SK-N-SH (cell line): ENCODE measurements at regions of chr11 and their contacts with region 1.

Region 1: DNA sequence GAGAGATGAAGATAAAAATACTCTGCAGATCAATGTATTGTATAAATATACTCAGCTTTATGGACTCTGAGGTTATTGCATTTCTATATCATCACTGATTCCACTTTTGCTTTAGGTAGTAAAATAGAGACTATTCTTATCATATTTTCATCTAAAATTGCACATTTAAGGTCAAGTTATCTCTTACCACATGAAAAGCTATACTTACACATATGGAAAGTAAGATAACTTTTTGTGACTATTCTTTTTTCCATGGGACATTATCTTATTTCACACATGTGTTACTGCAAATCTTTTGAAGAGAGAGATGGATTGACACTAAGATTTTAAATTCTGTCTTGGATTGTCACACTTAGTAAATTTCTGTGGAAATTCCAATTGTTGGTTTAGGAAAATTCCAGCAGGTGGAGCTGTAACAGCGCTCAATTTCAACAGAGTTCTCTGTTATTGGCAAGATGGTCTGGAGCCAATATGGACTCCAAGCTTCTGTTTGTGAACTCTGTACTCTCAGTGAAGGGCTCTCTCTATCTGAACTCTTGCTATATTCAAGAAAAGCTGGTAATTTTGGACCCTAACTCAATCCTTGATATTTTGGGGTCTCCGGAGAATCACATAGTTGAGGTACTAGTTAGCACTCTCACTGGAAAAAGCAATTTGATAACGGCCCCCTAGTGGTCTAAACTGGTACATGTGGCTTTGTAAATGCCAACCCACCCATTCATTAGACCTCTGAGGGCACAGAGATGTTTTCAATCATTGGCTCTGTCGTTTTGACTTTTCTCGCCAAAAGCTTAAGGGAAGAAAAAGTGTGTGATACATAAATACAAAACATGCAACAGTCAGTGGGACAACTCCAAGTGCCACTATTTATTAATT is 429.7 kb downstream of the ETS1 start:
- DNase-seq: peak; percentile 56
- H3K4me3 ChIP-seq: peak overlapping the region; percentile 28 to 46; a peak in 3 of 4 replicates
- H3K27ac ChIP-seq: peak overlapping the region in 1 of 2 experiments; percentile 55; a peak in 1 of 4 replicates
- H3K4me1 ChIP-seq: no peaks in the 10 kb centered on the region; a peak in 1 of 4 replicates
- H3K27me3 ChIP-seq: no peaks in the 10 kb centered on the region
- CTCF ChIP-seq: peak; percentile 100
- EP300 ChIP-seq: no peak
- RAD21 ChIP-seq: peak; percentile 72

Region 2: DNA sequence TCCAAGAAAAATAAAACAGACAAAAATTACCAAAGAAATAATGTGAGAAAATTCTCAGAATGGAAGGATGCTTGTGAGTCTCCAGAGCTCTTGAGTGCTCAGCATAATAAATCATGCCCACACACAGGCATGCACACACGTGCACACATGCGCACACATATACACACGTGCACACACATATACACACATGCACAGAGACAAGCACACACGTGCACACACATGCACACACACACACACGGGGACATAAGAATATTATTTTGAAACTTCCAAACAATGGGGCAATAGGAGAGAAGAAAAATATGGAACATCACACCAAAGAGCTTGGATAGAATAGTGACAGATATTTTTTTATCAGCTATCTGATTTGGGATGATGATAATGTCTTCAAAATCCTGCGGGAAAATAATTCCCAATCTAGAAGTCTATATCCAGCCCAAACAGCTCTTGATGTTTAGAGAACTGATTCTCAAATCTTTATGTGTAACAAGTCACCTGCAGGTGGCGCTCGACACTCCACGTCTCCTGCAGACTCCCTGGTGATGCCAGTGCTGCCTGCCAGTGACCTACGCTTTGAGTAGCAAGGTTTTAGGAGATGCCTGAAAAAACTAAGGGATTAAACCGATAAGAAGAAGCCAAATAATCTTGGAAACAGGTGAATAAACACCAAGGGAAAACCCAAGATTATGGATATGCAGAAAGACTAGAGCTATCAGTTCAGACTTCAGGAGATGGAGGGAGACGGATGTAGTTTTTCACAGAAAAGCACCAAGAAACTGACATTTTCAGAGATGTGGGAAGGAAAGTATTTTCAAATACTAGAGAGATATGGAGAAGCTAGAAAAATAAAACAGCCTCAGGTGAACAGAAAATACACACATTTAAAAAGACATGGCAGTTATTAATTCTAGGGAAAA is 313.9 kb before region 1 on chr11:
- CTCF ChIA-PET with region 1: interaction called, 13 read pairs
- POLR2A ChIA-PET with region 1: no interaction called
- DNase-seq: peak; percentile 68
- H3K4me3 ChIP-seq: no peak overlapping the region; a peak in 1 of 4 replicates
- H3K27ac ChIP-seq: peak overlapping the region in 1 of 2 experiments; percentile 45; a peak in 2 of 4 replicates
- H3K4me1 ChIP-seq: peaks cover 0 to 4% of the 10 kb centered on the region in 2 experiments; a peak in 2 of 4 replicates
- H3K27me3 ChIP-seq: no peaks in the 10 kb centered on the region
- CTCF ChIP-seq: peak; percentile 87
- EP300 ChIP-seq: no peak
- RAD21 ChIP-seq: peak; percentile 80

Region 3: DNA sequence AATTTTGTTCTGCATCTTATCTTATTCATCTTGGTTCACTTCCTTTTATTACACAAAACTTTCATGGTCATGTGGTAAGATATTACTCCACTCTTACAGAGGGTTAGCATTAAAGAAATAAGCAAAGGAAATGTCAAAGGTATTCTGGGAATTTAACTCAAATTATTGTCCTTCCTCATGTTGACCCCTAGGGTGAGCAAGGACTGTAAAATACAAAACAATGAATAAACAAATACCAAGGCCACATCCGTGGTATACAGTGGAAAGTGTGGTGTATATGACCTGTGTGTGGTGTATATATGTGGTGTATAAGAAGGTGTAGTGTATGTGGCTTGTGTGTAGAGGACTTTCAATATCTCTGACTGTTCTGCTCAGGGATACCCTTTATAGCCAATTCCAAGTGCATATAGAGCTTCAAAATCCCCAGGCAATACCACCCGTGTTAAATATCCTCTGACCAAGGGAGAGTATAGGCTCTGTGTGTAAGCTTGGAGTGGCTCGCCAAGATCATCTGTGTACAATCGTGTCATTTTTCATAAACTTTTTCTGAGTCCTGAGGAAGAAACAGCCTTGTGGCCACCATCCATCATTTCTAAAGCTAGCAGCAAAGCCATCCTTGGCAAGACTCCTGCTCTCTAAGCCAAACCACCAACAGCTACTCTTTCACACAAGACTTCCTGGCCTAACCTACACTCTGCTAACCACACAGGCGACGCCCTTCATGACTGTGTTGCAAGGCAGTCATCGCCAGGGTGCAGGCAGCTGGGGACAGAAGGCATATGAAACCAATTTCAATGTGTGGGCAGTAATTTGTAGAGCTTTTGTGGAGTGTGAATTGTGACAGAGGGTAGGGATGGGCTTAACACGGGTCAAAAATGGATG is 118.3 kb before region 1 on chr11:
- CTCF ChIA-PET with region 1: interaction called, 31 read pairs
- POLR2A ChIA-PET with region 1: no interaction called
- DNase-seq: no peak
- H3K4me3 ChIP-seq: no peak overlapping the region
- H3K27ac ChIP-seq: peak overlapping the region in 1 of 2 experiments; percentile 62; a peak in 1 of 4 replicates
- H3K4me1 ChIP-seq: peaks cover 15 to 29% of the 10 kb centered on the region in 2 experiments; a peak in 3 of 4 replicates
- H3K27me3 ChIP-seq: no peaks in the 10 kb centered on the region
- CTCF ChIP-seq: peak; percentile 35
- EP300 ChIP-seq: peak in 1 of 2 experiments; percentile 73; a peak in 1 of 4 replicates
- RAD21 ChIP-seq: no peak

Region 4: GRCh38 chr11:128135451-128135850 is 22.2 kb before region 1 on chr11:
- CTCF ChIA-PET with region 1: interaction called, 60 read pairs
- POLR2A ChIA-PET with region 1: no interaction called
- DNase-seq: no peak
- H3K4me3 ChIP-seq: no peak overlapping the region
- H3K27ac ChIP-seq: no peak overlapping the region
- H3K4me1 ChIP-seq: peaks cover 0 to 12% of the 10 kb centered on the region in 2 experiments; a peak in 2 of 4 replicates
- H3K27me3 ChIP-seq: no peaks in the 10 kb centered on the region
- CTCF ChIP-seq: no peak
- EP300 ChIP-seq: no peak
- RAD21 ChIP-seq: no peak

Region 5: DNA sequence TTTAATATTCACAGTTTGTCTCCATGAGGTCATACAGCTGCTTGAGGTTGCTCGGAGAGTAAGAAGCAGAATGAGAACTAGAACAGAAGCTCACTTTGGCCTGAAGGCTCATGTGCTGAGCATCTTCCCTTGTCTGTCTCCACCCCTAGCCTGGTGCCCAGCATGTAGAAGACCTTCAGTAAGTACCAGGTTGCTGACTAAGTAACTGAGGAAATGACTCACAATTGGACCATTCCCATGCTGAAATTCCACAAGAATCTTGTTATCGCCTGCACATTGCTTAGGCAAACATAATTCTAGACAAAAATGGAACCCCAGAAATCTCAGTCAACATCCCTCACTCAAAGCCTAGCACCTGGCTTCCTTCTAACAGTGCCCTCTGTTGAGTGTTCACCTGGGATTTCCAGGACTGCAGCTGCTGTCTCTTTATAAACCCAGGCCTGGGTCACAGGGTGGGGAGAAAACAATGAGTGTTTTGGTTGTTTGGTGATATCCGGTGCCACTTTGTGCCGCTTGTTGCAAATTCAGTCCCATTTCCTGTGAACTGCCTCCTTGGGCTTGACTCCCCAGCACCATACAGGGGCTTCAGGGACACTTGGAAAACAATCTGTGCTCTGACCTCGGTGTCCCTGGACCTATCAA is 22.9 kb after region 1 on chr11:
- CTCF ChIA-PET with region 1: interaction called, 16 read pairs
- POLR2A ChIA-PET with region 1: no interaction called
- DNase-seq: no peak
- H3K4me3 ChIP-seq: no peak overlapping the region
- H3K27ac ChIP-seq: peak overlapping the region; percentile 39 to 64
- H3K4me1 ChIP-seq: peaks cover 24 to 29% of the 10 kb centered on the region in 2 experiments
- H3K27me3 ChIP-seq: no peaks in the 10 kb centered on the region
- CTCF ChIP-seq: no peak
- EP300 ChIP-seq: peak in 1 of 2 experiments; percentile 87; a peak in 2 of 4 replicates
- RAD21 ChIP-seq: no peak

Region 6: GRCh38 chr11:128323381-128323780 is 165.7 kb after region 1 on chr11:
- CTCF ChIA-PET with region 1: no interaction called
- POLR2A ChIA-PET with region 1: no interaction called
- DNase-seq: no peak
- H3K4me3 ChIP-seq: no peak overlapping the region
- H3K27ac ChIP-seq: no peak overlapping the region
- H3K4me1 ChIP-seq: peaks cover 0 to 2% of the 10 kb centered on the region in 2 experiments; a peak in 1 of 4 replicates
- H3K27me3 ChIP-seq: no peaks in the 10 kb centered on the region
- CTCF ChIP-seq: peak; percentile 50
- EP300 ChIP-seq: no peak
- RAD21 ChIP-seq: peak; percentile 59

Region 7: GRCh38 chr11:128630367-128631230 is 472.9 kb after region 1 on chr11:
- CTCF ChIA-PET with region 1: interaction called, 98 read pairs
- POLR2A ChIA-PET with region 1: no interaction called
- DNase-seq: peak; percentile 83
- H3K4me3 ChIP-seq: peak overlapping the region in 1 of 2 experiments; percentile 50; a peak in 1 of 4 replicates
- H3K27ac ChIP-seq: peak overlapping the region; percentile 27 to 50; a peak in 2 of 4 replicates
- H3K4me1 ChIP-seq: peaks cover 0 to 14% of the 10 kb centered on the region in 2 experiments; a peak in 2 of 4 replicates
- H3K27me3 ChIP-seq: no peaks in the 10 kb centered on the region
- CTCF ChIP-seq: peak; percentile 97
- EP300 ChIP-seq: no peak
- RAD21 ChIP-seq: peak; percentile 98

Region 8: DNA sequence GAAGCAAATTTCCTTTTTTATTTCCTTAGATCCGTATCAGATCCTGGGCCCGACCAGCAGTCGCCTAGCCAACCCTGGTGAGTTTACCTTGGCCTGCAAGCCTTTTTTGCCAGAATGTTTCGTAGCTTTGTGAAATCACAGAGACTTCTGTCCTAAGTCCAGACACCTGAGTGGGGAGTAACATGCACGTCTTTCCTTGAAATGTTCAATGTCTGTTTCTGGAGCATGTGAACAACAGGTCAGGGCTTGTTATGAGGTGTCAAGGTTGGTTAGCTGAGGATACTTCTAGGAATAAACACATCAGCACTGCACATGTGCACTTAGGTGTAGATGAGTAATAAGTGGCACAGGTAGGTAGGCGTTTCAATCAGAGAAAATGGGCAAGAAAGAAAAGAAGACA is 651.5 kb after region 1 on chr11:
- CTCF ChIA-PET with region 1: interaction called, 22 read pairs
- POLR2A ChIA-PET with region 1: no interaction called
- DNase-seq: no peak
- H3K4me3 ChIP-seq: no peak overlapping the region
- H3K27ac ChIP-seq: no peak overlapping the region
- H3K4me1 ChIP-seq: peaks cover 0 to 3% of the 10 kb centered on the region in 2 experiments; a peak in 2 of 4 replicates
- H3K27me3 ChIP-seq: no peaks in the 10 kb centered on the region
- CTCF ChIP-seq: no peak
- EP300 ChIP-seq: no peak
- RAD21 ChIP-seq: no peak